ENCODE measurements at regions of chr7 and their contacts with region 1.

Region 1: GRCh38 chr7:99551767-99552463 is at the start of gene FAM200A:
- DNase-seq: peak; percentile 78 to 92 (median 89)
- H3K4me3 ChIP-seq: peak within 1 kb of the TSS; percentile 57 to 94 (median 81)
- H3K27ac ChIP-seq: peak within 1 kb of the TSS; percentile 63 to 91 (median 78)
- H3K4me1 ChIP-seq: peaks cover 8 to 20% of the 10 kb centered on the region in 2 donors
- H3K27me3 ChIP-seq: no peaks in the 10 kb centered on the region
- CTCF ChIP-seq: no peak
- POLR2A ChIP-seq: peak; percentile 56 to 79
- total RNA-seq, gene FAM200A: 4.0 to 10.4 (median 6.5) TPM

Region 2: GRCh38 chr7:99499721-99500636 is 51.9 kb before region 1 on chr7 and contains the start of gene ZNF394:
- intact Hi-C with region 1: loop called in 1 of 2 experiments (anchors 5 kb)
- DNase-seq: peak; percentile 89 to 96 (median 92)
- H3K4me3 ChIP-seq: peak within 1 kb of the TSS; percentile 43 to 91 (median 70)
- H3K27ac ChIP-seq: peak within 1 kb of the TSS; percentile 86 to 96 (median 92)
- H3K4me1 ChIP-seq: peaks cover 21 to 24% of the 10 kb centered on the region in 2 donors
- H3K27me3 ChIP-seq: no peaks in the 10 kb centered on the region
- CTCF ChIP-seq: no peak
- POLR2A ChIP-seq: peak; percentile 8 to 83
- total RNA-seq, gene ZNF394: 11.8 to 29.5 (median 23.3) TPM

Region 3: DNA sequence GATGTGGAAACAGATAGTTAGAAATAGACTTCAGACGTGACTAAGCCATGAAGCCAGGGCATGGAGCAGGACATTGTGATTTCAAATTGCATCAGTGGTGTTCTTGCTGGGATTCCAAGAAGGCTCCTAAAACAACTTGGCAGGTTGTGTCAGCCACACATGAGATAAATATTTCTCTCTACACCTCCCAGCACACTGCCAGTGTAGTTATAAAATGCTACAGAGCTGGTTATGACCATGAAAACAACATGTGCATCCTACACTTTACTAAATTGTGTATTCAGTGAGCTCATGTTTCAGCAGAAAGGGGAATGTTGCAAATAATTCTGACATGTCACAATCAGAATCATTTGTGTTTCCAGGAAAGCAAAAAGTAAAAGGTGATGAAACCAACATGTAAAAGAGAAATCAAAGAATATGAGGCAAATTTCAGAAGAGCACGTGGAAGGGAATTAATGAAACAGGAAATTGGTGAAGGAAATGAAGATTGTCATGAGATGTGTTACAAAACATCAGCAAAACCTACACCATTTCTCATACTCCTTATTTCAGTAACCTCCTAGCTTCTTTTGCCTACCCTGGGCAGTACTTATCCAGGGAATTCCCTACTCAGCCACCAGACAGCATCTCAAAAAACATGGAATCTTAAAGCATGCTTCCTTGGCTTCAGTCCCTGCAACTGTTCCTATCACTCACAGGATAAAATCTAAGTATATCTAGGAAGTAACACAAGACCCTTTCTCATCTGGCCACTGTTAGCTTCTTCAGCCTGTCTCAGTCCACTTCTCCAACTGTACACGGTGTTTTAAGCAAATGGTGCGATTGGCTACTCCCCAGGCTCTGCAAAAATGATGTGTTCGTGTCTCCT is 188.9 kb after region 1 on chr7:
- intact Hi-C with region 1: no loop called
- DNase-seq: peak in 4 of 7 donors; percentile 25 to 62 (median 28)
- H3K4me3 ChIP-seq: no peak overlapping the region
- H3K27ac ChIP-seq: no peak overlapping the region
- H3K4me1 ChIP-seq: no peaks in the 10 kb centered on the region
- H3K27me3 ChIP-seq: no peaks in the 10 kb centered on the region
- CTCF ChIP-seq: no peak
- POLR2A ChIP-seq: no peak

Measured in adrenal gland (tissue), 19 donors.